Left ventricle myocardium inferior (tissue), 1 donor: ENCODE measurements at regions of chr15 and their contacts with region 1.

Region 1: DNA sequence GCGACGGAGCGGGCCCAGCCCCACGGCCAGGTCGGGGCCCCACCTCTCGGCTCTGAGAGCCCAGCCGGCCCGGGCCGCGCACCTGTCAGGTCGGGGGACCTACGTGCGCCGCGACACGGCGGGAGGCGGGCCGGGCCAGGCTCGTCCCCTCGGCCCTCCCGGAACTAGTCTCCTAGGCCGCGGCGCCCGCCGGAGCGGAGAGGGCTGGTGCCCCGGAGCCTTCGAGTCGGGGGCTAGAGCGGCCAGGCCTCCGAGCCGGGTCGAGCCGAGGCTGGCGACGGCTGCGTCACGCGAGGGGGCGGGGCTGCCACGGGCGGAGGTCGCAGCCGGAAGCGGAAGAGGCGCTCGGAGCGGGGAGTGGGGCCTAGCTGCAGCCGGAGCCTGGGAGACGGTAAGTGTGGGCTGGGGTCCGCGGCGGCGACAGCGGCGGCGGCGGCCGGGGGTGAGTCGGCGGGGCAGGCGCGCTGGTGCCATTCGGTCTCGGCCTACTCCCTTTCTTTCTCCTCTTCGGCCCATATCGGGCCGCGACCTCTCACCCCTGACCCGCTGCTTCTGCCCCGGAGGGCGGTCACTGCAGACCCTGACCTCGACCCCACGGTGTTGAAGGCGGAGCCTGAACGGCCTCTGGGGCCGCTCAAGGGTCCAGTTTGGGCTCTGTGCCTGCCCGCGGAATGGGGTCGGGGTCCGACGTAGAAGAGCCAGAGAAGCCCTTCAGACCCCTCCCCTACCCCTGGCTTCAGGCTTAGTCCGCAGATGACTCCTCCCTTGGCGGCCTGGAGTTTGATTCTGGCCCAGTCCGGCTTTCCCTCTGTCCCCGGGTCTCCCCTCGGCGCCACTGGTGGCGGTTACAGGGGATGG is at the start of gene CLK3:
- DNase-seq: peak; percentile 97
- H3K4me3 ChIP-seq: peak within 1 kb of the TSS; percentile 87
- H3K27ac ChIP-seq: peak within 1 kb of the TSS; percentile 97
- H3K4me1 ChIP-seq: peaks cover 74% of the 10 kb centered on the region
- H3K27me3 ChIP-seq: no peaks in the 10 kb centered on the region
- CTCF ChIP-seq: no peak
- total RNA-seq, gene CLK3: 53.1 TPM

Region 2: DNA sequence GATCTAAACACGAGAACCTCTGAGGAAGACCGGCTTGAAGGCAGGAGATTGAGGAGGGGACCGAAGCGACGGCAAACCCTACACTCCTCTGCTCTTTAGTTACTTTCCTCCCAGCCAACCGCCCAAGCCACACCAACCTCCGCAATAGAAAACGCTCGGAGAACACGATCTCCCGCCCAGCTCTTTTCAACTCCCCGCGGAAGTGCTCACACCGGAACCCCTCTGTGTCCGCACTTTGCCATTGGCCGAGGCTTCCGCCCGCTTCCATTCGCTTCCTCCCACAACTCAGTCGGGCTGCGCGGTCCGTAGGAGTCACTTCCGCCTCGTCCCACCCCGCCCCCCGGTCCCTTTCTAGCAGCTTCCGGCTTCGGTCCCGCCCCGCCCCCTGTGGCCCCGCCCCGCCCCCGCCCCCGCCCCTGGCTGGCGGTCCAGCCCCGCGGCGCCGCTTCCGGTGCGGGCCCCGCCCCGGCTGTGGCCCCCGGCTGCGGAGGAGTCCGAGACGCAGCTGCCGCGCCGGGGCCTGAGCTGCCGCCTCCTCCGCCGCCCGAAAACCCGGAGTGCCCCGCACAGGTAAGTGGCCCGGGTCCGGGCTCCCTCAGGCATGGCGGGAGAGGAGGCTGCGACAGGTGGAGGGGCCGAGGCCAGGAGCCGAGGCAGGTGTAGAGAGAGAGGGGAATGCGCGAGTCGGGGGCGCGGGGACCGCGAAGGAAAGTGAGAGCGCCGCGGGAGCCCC is 74.8 kb before region 1 on chr15 and contains the start of gene ARID3B:
- intact Hi-C with region 1: loop called (anchors 10 kb)
- DNase-seq: peak; percentile 98
- H3K4me3 ChIP-seq: peak within 1 kb of the TSS; percentile 95
- H3K27ac ChIP-seq: peak within 1 kb of the TSS; percentile 81
- H3K4me1 ChIP-seq: peaks cover 39% of the 10 kb centered on the region
- H3K27me3 ChIP-seq: no peaks in the 10 kb centered on the region
- CTCF ChIP-seq: no peak
- total RNA-seq, gene ARID3B: 2.0 TPM

Region 3: DNA sequence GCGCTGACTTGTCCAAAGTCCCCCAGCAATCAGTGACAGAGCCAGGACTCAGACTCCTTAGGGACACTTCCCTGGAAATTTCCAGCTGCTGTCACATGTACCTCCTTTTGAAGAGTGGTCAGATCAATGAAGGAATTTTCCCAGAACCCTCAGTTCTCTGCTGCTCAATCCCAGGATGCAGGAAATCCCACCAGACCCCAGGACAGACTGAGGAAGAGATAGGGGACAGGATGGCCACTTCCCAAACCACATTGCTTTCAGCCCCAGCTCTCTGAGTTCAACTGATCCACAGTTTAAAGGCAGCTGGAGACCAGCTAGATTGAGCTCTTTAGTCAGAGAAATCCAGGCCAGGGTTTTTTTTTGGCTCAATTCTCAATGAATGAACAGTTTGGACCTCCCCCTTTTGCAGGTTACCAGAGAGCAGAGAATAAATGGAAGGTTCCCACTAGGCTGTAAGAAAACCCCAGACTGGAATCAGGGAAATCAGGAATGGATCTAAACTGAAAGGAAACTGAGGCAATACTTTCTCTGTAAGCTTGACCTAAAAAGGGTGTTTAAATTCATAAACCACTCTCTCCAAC is 108.1 kb after region 1 on chr15:
- intact Hi-C with region 1: no loop called
- DNase-seq: no peak
- H3K4me3 ChIP-seq: no peak overlapping the region
- H3K27ac ChIP-seq: no peak overlapping the region
- H3K4me1 ChIP-seq: peaks cover 39% of the 10 kb centered on the region
- H3K27me3 ChIP-seq: no peaks in the 10 kb centered on the region
- CTCF ChIP-seq: no peak